ENCODE measurements at regions of chr12 and their contacts with region 1.

Region 1: DNA sequence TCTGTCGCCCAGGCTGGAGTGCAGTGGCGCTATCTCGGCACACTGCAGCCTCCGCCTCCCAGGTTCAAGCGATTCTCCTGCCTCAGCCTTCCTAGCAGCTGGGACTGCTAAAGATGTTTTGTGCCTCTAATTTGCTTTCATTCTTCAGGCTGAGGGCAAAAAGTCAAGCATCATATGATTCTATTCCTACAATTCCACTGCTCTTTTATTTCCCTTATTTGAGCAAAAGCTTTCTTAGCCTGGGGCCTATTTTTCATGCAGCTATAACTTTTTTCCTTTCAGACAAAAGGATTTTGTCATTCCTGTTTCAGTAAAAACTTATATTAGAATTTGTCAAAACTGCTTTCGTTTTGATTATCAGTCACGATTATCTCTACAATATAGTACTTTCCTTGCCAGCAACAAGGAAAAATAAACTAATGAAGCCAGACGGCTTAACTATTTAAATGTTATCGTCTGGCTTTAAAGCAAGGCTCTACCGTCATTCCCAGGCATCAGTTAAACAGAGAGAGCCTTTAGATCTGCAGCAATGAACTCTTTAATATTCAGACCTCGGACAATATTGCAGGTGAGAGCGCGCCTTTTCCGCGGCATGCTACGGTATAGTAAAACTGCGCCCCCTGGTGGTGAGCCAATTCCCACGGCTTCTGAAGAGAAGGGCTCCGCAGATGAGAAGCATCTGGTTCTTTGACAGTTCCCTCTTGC is 1.4 kb upstream of the SLC2A13 start:
- DNase-seq: peak; percentile 95
- ATAC-seq: peak; percentile 64

Region 2: DNA sequence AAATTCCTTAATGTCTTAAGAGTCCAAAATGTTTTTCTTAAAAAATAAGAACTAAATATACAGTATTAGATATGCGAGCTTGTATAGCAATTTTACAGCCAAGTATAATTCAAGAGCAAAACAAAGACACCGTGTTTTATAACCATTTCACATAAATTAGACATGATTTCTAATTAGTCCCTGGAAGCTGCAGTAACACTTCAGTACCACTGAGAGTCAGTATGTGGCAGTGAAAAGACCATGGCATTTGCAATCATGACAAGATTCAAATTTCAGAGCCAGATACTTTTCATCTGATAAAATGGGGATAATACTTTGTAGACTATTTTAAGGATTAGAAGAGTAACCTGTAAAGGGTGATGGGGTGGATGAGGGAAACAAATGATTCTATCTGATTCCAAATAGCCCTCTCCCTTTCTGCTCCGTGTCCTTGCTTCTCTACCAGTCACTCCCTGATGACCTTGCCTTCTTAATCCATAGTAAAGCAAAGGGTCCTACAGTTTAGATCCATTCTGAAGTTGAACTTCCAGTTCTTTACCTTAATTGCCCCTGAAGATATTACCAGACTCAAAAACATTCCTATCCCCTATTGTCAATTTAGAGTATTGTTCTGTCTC is 342.2 kb before region 1 on chr12:
- intact Hi-C with region 1: loop called (anchors 5 kb)
- DNase-seq: no peak
- ATAC-seq: peak; percentile 62

Region 3: GRCh38 chr12:40010899-40011774 is 96.1 kb before region 1 on chr12:
- intact Hi-C with region 1: loop called (anchors 2 kb)
- DNase-seq: no peak
- ATAC-seq: peak; percentile 97